Right ventricle myocardium inferior (tissue), 1 donor: ENCODE measurements at regions of chr2 and their contacts with region 1.

Region 1: DNA sequence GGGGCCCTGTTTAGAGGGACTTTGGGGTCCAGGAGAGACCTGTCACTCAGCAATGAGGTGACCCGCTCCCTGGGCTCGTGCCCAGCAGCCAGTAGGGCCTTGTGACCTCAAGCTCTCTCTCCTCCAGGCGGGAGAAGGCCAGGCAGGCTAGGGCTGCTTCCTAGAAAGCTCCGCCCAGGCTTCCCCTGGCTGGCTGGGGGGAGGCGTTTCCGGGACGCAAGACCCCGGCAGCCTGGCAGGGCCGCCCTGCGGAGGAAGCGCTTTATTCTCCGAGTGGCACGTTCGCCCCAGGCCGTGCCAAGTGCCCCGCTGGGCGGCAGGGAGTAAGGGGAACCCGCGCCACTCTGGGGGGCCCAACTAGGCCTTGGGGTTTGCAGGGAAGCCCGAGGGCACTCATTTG is 21.2 kb upstream of the EPAS1 start:
- DNase-seq: peak; percentile 80
- ATAC-seq: peak; percentile 71

Region 2: GRCh38 chr2:46076251-46076650 is 199.7 kb before region 1 on chr2:
- intact Hi-C with region 1: loop called (anchors 5 kb)
- DNase-seq: no peak
- ATAC-seq: no peak

Region 3: GRCh38 chr2:46091004-46091403 is 185.0 kb before region 1 on chr2:
- intact Hi-C with region 1: loop called (anchors 1 kb)
- DNase-seq: no peak
- ATAC-seq: peak; percentile 54